AG04449 (cell line): ENCODE measurements at regions of chr1 and their contacts with region 1.

Region 1: DNA sequence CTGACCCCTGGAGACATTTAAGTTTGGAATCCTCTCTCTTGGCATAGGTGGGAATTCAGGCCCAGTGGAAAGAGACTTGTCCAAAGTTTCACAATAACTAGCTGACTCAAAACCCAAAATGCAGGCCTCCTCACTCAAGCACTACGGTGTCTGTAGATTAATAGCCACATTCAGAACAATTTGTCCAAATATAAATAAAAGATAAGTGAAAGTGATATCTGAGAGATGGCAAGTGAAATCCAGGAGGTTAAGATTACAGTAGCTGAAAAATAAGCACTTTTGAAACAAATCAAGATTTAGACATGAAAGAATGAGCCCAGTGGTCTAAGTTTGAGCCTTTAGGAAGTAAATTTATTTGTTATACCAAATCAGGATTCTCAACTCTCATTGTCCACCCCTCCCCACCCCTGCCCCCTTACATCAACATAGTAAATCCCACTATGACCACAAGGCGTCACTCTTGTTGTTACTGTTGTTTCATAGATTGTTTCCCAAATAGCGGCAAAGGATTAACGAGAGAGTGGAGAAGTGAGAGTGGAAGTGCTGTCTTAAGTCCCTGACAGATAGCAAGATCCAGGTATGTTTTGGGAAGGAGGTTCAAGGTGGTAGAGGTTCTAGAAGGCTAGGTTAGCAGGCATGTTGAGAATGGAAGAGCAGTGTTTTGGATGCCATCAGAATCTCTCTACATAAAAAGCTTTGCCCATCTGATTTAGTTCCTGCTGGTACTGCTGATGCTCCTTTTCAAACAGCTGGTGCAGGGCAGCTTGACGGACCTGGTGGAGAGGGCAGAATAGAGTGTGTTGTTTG is 7.1 kb upstream of the TPM3 start:
- DNase-seq: no peak
- H3K4me3 ChIP-seq: no peak overlapping the region
- CTCF ChIP-seq: peak; percentile 51

Region 2: GRCh38 chr1:154213274-154213673 is 14.3 kb after region 1 on chr1:
- CTCF ChIA-PET with region 1: interaction called, 23 read pairs
- POLR2A ChIA-PET with region 1: no interaction called
- DNase-seq: no peak
- H3K4me3 ChIP-seq: no peak overlapping the region
- CTCF ChIP-seq: no peak

Region 3: DNA sequence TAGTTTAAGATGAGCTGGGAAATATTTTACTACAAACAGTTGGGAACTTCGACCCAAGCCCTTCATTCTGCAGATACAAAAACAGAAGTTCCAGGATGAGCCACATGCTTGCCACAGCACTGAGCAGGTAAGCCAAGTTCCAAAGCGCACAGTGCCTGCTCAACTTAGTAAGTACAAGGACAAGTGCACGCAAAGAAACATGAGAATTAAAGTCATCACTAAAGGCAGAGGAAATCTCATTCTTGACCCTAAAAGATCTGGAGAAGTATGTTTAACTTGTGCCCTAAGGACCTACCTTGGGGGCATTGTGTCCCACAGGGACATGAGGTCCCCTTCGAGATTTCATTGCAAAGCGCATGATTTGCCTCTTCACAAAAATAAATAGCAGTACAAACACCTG is 20.6 kb after region 1 on chr1:
- CTCF ChIA-PET with region 1: interaction called, 23 read pairs
- POLR2A ChIA-PET with region 1: no interaction called
- DNase-seq: no peak
- H3K4me3 ChIP-seq: peak overlapping the region; percentile 97
- CTCF ChIP-seq: no peak

Region 4: GRCh38 chr1:154272217-154272998 is 73.4 kb after region 1 on chr1 and contains the start of gene HAX1:
- CTCF ChIA-PET with region 1: interaction called, 25 read pairs
- POLR2A ChIA-PET with region 1: no interaction called
- DNase-seq: peak; percentile 75
- H3K4me3 ChIP-seq: peak within 1 kb of the TSS; percentile 97
- CTCF ChIP-seq: peak; percentile 78

Region 5: DNA sequence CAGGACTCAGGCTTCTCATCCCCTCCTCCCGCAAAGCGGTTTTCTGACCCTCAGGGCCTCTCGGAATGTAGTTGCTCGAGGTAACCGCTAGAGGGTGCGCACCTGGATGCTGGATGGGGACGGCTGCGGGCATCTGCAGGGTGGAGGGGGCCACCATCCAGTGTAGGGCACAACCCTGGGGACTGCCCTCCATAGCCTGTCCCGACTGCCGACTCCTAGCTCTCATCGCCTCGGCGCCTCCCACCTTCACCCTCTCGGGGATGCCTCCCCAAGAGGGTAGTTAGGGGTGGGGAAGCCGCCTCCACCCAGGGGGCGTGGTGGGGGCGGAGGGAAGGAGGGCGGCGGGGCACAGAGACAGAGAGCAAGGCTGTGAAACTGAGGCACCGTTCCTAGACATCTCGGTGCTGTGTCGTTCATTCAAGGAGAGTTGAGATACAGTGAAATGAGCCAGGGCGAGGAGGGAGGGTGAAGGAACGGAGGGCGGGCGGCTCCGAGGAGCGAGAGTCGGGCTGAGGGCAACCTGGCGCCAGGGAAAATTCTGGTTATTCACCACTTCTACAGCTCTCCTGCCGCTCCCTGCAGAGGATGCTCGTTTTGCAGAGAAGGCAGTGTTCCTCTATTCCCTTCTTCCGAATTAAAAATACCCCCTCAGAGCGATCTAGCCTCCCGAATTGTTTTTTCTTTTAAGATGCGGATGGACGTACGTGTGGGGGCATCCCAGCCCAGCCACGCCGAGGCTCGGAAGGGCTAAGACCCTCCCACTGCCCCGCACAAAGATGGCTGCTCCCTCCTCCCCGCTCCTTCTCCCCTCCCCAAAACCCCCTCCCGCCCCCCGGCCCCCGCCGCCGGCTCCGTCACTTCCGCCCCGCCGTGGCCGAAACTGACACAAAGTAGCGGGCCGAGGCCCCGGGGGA is 126.0 kb after region 1 on chr1 and contains the start of gene ATP8B2:
- CTCF ChIA-PET with region 1: interaction called, 16 read pairs
- POLR2A ChIA-PET with region 1: no interaction called
- DNase-seq: no peak
- H3K4me3 ChIP-seq: peak within 1 kb of the TSS; percentile 95
- CTCF ChIP-seq: peak; percentile 94

Region 6: DNA sequence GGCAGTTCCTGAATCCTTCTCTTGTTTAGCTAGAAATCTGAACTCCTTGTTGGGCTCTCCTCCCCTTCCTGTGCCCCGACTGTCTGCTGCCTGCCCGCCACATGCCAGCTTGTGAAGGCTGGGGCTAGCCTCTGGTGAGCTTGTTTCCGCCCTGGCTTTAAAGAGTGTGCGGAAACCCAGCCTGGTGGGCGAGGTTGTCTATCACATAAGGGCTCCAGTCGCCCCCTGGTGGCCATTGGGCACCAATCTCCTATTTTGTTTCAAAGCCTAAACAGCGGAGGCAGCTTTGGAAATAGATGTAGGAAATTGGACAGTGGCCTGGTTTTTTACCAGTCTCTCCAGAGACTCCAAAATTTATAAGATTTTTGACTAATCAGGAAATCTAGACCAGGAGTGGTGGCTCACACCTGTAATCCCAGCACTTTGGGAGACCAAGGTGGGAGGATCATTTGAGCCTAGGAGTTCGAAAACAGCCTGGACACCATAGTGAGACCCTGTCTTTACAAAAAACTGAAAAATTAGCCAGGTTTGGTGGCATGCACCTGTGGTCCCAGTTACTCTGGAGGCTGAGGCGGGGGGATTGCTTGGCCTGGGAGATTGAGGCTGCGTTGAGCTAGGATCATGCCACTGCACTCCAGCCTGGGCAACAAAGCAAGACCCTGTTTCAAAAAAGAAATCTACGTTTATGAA is 136.2 kb after region 1 on chr1:
- CTCF ChIA-PET with region 1: interaction called, 30 read pairs
- POLR2A ChIA-PET with region 1: no interaction called
- DNase-seq: no peak
- H3K4me3 ChIP-seq: no peak overlapping the region
- CTCF ChIP-seq: peak; percentile 81